Gastrocnemius medialis (tissue), 4 donors: ENCODE measurements at regions of chr13 and their contacts with region 1.

Region 1: GRCh38 chr13:20773194-20774080 is at the start of gene EEF1AKMT1:
- DNase-seq: peak; percentile 82 to 93
- ATAC-seq: peak; percentile 85 to 90
- H3K4me3 ChIP-seq: peak within 1 kb of the TSS; percentile 73 to 90 (median 82)
- H3K27ac ChIP-seq: peak within 1 kb of the TSS; percentile 88 to 95 (median 94)
- H3K4me1 ChIP-seq: peaks cover 10 to 11% of the 10 kb centered on the region in 2 donors
- H3K27me3 ChIP-seq: no peaks in the 10 kb centered on the region
- CTCF ChIP-seq: peak in 1 of 5 experiments; percentile 17
- POLR2A ChIP-seq: peak; percentile 78 to 87
- total RNA-seq, gene EEF1AKMT1: 5.9 to 8.5 (median 8.0) TPM

Region 2: DNA sequence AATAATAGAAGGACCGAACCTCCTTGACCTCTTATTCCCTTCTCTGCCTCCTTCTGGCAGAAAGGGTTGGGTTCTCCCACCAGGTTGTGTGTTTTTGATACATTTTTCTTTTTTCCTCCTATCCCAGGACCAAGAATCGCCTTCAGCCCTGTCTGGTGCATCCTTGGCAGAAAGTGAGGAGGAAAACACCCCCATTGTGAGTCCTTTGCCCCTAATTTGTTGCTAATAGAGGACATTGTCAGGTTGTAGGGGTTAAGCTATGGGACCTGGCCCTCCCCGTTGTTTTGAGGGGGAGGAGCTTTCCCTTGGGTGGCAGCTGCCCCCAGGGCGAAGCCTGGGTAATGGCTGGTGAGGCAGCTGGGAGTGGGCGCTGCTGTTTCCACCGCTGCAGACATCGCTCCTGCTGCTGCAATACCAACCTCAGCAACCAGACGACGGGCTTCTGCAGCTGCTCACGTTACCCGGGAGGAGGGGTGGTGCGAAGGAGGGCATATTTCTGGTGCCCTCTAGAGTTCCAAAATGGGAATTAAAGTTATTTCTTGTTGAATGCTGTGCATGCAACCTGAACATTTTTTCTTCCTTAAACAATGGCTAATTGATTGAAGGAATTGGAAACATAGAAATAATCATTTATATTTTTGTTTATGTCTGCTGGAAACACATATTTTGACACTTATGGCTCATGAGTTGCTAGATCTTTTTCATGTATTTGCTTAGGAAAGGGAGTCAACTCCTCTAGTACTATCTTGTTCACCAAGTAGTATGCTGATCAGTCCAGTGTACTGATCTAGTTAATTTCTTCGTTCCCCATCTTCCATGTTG is 813.4 kb before region 1 on chr13:
- in situ Hi-C with region 1: no loop called
- intact Hi-C with region 1: loop called (anchors 5 kb)
- DNase-seq: peak; percentile 80 to 89
- ATAC-seq: peak; percentile 64 to 70
- H3K4me3 ChIP-seq: peak overlapping the region; percentile 74 to 97 (median 86)
- H3K27ac ChIP-seq: peak overlapping the region; percentile 96 to 98 (median 97)
- H3K4me1 ChIP-seq: peaks cover 19 to 39% of the 10 kb centered on the region in 2 donors
- H3K27me3 ChIP-seq: no peaks in the 10 kb centered on the region
- CTCF ChIP-seq: peak; percentile 78 to 99 (median 85)
- POLR2A ChIP-seq: peak; percentile 42 to 60

Region 3: GRCh38 chr13:20713751-20714150 is 59.7 kb before region 1 on chr13:
- in situ Hi-C with region 1: no loop called
- intact Hi-C with region 1: loop called (anchors 2 kb)
- DNase-seq: peak in 1 of 2 donors; percentile 42
- ATAC-seq: no peak
- H3K4me3 ChIP-seq: peak overlapping the region in 3 of 4 donors; percentile 38 to 56 (median 47)
- H3K27ac ChIP-seq: peak overlapping the region; percentile 80 to 89 (median 88)
- H3K4me1 ChIP-seq: peaks cover 46 to 56% of the 10 kb centered on the region in 2 donors
- H3K27me3 ChIP-seq: no peaks in the 10 kb centered on the region
- CTCF ChIP-seq: no peak
- POLR2A ChIP-seq: peak in 1 of 2 donors; percentile 13

Region 4: DNA sequence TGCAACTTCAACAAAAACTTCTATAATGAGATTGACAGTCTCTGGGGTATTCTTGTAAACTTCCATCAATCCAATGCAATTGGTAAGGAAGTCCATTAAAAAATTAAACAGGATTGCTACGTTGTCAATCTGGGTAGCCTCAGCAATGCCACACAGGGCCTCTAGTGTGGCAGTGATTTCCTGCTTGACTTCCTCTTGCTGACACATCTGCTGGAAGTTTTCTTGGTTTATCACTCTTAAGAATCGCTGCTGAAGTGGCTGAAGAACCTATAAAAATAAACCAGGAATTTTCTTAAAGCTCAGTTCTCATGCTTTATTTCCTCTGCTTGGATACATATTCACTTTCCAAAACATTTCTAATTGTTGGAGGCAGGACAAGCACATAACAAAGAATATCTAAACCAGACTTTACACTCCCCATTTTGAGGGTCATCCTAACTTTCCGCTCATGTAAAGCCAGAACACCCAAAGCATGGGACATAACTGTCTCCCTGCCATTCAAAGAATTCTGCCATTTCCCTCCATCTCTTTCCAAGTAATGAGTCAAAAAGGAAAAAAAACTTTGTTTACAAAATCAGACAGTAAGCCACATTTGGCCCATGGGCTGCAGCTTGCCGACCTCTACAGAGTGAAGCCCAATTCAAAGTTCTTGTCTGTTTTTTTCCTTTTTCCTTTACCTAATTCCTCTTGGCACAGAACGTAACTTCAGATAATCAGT is 23.5 kb after region 1 on chr13:
- in situ Hi-C with region 1: no loop called
- intact Hi-C with region 1: loop called (anchors 2 kb)
- DNase-seq: no peak
- ATAC-seq: no peak
- H3K4me3 ChIP-seq: no peak overlapping the region
- H3K27ac ChIP-seq: peak overlapping the region; percentile 29 to 66 (median 52)
- H3K4me1 ChIP-seq: peaks cover 0 to 10% of the 10 kb centered on the region in 2 donors
- H3K27me3 ChIP-seq: no peaks in the 10 kb centered on the region
- CTCF ChIP-seq: no peak
- POLR2A ChIP-seq: no peak

Region 5: DNA sequence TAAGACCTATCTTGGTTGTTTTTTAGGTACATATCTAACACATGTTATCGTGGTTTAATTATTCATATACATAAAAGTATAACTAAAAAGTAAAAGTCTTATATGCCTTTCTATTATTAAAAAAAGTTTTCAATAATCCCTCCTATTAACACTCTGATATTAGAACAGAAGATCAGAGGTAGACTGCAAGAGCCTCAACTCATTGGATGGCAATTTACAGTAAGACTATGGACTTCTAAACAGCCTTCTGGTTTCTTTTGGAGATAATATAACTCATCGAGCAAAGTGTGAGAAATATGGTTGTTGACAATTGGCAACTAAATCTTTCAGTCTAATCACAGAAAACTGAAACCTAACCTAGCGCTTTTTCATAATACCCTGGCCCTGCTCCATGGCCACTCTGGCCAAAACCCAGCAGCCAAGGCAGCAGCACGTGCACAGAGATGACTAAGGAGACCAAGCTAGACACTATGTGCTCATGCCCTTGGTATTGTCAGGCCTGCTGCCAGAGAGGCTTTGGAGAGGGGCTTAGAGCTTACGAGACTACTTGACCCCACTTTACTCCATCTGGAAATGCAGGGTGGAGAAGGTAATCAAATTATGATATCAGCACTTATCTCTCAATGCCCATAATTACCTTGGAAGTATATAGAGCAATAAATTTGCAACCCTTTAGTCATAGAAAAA is 40.9 kb after region 1 on chr13:
- in situ Hi-C with region 1: no loop called
- intact Hi-C with region 1: loop called (anchors 5 kb)
- DNase-seq: peak; percentile 85 to 95
- ATAC-seq: peak; percentile 94 to 96
- H3K4me3 ChIP-seq: peak overlapping the region in 3 of 4 donors; percentile 12 to 45 (median 29)
- H3K27ac ChIP-seq: peak overlapping the region; percentile 87 to 93 (median 88)
- H3K4me1 ChIP-seq: peaks cover 46 to 63% of the 10 kb centered on the region in 2 donors
- H3K27me3 ChIP-seq: no peaks in the 10 kb centered on the region
- CTCF ChIP-seq: no peak
- POLR2A ChIP-seq: no peak

Region 6: DNA sequence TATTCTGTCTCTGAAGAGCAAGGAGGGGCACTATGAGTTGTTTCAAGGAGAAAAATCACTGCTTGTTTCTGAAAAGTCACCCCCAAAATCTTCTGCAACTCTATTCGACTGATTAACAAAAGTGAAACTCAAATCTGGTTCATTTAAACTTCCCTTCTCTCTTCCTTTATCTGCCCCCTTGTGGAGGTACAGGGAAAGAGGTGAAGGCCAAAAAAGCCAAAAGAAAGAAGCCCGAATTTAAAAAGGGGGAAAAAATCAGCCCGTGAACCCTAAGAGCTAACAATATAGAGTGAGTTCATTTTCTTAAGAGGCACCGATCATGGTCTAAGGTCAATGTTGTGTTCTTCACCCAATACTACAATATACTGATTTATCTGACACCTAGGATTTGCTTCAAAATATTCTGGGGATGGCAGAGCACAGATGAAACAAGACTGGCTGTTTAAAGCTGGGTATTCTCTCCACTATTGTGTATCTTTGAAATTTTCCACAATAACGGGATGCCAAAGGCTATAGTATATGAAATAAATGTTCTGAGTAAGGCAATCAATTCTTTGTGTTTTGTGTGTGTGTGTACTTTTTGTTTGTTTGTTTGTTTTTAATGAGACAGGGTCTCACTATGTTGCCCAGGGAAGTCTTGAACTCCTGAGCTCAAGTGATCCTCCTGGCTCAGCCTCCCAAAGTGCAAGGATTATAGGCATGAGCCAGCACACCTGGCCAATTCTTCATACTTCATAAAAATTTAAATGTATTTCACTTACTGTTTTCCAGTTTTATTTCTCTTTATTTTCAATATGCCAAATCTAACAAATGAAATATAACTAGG is 55.3 kb after region 1 on chr13:
- in situ Hi-C with region 1: no loop called
- intact Hi-C with region 1: loop called (anchors 1 kb)
- DNase-seq: no peak
- ATAC-seq: peak; percentile 33 to 50
- H3K4me3 ChIP-seq: peak overlapping the region; percentile 35 to 63 (median 49)
- H3K27ac ChIP-seq: peak overlapping the region; percentile 87 to 93 (median 88)
- H3K4me1 ChIP-seq: peaks cover 73 to 79% of the 10 kb centered on the region in 2 donors
- H3K27me3 ChIP-seq: no peaks in the 10 kb centered on the region
- CTCF ChIP-seq: peak; percentile 78 to 85 (median 84)
- POLR2A ChIP-seq: no peak

Region 7: DNA sequence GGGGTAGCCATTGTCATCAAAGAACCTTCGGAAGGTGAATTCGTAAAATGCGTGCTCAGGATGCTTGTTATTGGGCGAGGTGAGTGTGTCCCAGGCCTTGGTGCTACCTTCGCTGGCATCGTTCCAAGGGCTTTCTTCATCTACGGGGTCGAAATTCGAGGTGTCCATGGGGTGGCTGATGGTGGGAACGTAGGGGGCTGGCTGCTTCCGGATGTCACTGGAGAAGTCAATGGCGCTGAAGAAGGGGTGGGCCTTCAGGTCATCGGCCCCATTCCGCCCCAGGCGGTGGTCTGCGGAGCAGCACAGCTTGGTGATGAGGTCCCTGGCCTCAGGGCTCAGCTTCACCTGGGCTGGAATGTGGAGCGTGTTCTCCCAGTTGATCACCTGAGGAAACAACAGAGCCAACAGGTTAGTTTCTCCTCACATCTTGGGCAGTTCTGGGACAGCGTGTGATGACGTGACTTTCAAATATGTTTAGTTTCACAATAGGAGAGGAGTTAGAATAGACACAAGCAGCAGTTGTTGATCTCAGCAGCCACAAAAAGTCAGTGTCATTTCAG is 201.6 kb after region 1 on chr13:
- in situ Hi-C with region 1: no loop called
- intact Hi-C with region 1: no loop called
- DNase-seq: no peak
- ATAC-seq: no peak
- H3K4me3 ChIP-seq: no peak overlapping the region
- H3K27ac ChIP-seq: no peak overlapping the region
- H3K4me1 ChIP-seq: no peaks in the 10 kb centered on the region
- H3K27me3 ChIP-seq: no peaks in the 10 kb centered on the region
- CTCF ChIP-seq: no peak
- POLR2A ChIP-seq: no peak

Region 8: DNA sequence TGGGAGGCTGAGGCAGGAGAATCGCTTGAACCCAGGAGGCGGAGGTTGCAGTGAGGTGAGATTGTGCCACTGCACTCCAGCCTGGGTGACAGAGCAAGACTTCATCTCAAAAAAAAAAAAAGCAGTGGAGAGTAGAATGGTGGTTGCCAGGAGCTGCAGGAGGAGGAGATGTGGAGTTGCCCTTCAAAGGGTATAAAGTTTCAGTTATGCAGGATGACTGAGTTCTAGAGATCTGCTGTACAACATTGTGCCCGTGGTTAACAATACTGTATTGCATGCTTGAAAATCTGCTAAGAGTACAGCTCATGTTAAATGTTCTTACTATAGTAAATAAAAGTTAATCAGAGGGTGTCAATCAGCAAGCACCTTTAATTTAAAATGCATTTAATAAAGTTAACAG is 316.4 kb after region 1 on chr13:
- in situ Hi-C with region 1: no loop called
- intact Hi-C with region 1: no loop called
- DNase-seq: no peak
- ATAC-seq: no peak
- H3K4me3 ChIP-seq: no peak overlapping the region
- H3K27ac ChIP-seq: no peak overlapping the region
- H3K4me1 ChIP-seq: no peaks in the 10 kb centered on the region
- H3K27me3 ChIP-seq: no peaks in the 10 kb centered on the region
- CTCF ChIP-seq: no peak
- POLR2A ChIP-seq: no peak